ENCODE measurements at regions of chr2 and their contacts with region 1.

Region 1: DNA sequence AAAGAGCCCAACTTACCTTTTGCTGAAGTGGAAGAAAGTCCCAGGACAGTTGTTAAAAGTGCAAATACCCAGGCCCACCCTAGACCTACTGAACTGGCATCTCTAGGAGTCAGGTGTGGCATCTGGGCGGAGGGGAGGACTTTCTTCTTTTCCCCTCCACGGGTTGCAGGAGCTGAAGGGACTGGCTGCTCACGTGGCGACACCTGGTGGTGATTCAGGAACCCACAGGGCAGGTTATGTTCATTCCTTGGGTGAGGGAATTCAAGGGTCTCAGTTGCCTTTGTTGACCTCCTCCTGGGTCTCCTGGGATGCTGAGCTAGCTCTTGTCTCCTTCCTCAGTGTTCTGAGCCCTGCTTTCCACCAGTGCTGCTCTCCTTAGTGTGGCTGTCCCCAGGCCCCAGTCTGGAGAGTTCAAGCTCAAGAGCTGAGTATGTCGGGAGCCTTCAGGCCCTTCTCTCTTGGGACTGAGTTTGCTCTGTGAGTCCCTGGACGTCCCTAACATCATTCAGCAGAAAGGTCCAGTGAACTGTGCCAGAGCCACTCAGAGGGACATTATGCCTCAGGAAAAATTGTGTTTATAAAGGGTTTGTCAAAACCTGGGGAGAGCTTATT is 56.9 kb downstream of the DYSF start:
- H3K4me3 Mint-ChIP-seq: no peak overlapping the region
- H3K27ac Mint-ChIP-seq: peak overlapping the region; percentile 10
- H3K4me1 Mint-ChIP-seq: no peaks in the 10 kb centered on the region
- H3K27me3 Mint-ChIP-seq: no peaks in the 10 kb centered on the region

Region 2: GRCh38 chr2:71299507-71299906 is 210.8 kb before region 1 on chr2:
- intact Hi-C with region 1: loop called (anchors 2 kb)
- H3K4me3 Mint-ChIP-seq: no peak overlapping the region
- H3K27ac Mint-ChIP-seq: no peak overlapping the region
- H3K4me1 Mint-ChIP-seq: no peaks in the 10 kb centered on the region
- H3K27me3 Mint-ChIP-seq: no peaks in the 10 kb centered on the region

Region 3: GRCh38 chr2:71460595-71461303 is 49.6 kb before region 1 on chr2:
- intact Hi-C with region 1: loop called (anchors 1 kb)
- H3K4me3 Mint-ChIP-seq: no peak overlapping the region
- H3K27ac Mint-ChIP-seq: no peak overlapping the region
- H3K4me1 Mint-ChIP-seq: peaks cover 54% of the 10 kb centered on the region
- H3K27me3 Mint-ChIP-seq: peaks cover 11% of the 10 kb centered on the region